Dorsolateral prefrontal cortex (tissue), 120 donors: ENCODE measurements at regions of chr3 and their contacts with region 1.

Region 1: GRCh38 chr3:160163229-160163878 is 61.9 kb upstream of the C3orf80 start:
- DNase-seq: no peak
- H3K4me3 ChIP-seq: no peak overlapping the region
- H3K27ac ChIP-seq: peak overlapping the region in 2 of 59 donors; percentile 14 to 18
- H3K27me3 ChIP-seq: no peaks in the 10 kb centered on the region
- CTCF ChIP-seq: peak in 55 of 56 donors; percentile 29 to 72 (median 54)

Region 2: GRCh38 chr3:159091936-159092335 is 1071.4 kb before region 1 on chr3:
- intact Hi-C with region 1: no loop called
- DNase-seq: no peak
- H3K4me3 ChIP-seq: no peak overlapping the region
- H3K27ac ChIP-seq: no peak overlapping the region
- H3K27me3 ChIP-seq: no peaks in the 10 kb centered on the region
- CTCF ChIP-seq: no peak

Region 3: DNA sequence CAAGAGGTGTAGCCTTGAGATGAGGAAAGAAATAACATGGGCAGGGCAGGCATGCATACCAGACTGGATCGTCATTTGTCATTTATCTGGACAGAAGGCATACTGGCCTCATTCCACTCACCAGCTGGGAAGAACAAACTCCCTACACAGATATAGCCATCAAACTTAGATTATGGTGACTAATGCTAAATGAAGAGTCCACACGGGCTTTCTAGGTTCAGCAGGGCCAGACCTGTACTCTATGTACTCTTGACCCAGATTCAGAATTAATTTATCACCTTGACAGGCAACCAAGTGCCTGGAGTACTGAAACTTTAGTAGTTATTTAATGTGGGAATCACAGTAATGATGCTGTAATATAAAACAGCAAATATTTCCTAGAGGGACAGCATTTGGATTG is 339.0 kb before region 1 on chr3:
- intact Hi-C with region 1: no loop called
- DNase-seq: no peak
- H3K4me3 ChIP-seq: no peak overlapping the region
- H3K27ac ChIP-seq: peak overlapping the region in 25 of 59 donors; percentile 2 to 69 (median 24)
- H3K27me3 ChIP-seq: no peaks in the 10 kb centered on the region
- CTCF ChIP-seq: peak in 1 of 56 donors; percentile 10

Region 4: DNA sequence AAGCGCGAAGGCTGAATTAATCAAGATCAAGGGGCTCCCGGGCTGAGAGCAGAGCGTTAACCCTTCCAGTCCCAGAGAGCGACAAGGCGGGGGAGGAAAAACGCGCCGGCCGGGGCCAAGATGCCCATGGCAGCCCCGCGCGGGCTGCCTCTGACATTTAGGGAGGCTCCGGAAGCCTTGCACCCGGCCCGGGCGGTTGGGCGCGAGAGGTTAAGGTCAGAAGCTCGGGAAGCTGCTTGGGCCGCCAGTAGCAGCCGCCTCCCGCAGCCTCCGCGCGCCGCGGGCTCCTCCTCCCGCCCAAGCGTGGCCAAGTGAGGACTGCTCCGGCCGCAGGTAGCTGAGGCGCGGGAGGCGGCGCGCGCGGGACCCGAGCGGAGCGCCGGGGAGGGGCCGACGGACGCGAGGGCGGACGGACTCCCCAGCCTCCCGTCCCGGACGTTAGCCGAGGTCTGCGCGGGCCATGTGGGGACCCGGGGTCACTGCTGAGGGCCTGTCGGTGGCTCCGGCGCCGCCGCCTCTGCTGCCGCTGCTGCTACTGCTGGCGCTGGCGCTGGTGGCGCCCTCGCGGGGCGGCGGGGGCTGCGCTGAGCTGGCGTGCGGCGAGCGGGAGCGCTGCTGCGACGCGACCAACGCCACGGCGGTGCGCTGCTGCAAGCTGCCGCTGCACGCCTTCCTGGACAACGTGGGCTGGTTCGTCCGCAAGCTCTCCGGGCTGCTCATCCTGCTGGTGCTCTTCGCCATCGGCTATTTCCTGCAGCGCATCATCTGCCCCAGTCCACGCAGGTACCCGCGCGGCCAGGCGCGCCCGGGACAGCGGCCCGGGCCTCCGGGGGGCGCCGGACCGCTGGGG is 62.0 kb after region 1 on chr3 and contains the start of gene C3orf80:
- intact Hi-C with region 1: loop called in 1 of 2 experiments (anchors 10 kb)
- DNase-seq: peak in 9 of 10 donors; percentile 34 to 79 (median 60)
- H3K4me3 ChIP-seq: peak within 1 kb of the TSS; percentile 47 to 80 (median 69)
- H3K27ac ChIP-seq: peak within 1 kb of the TSS in 57 of 59 donors; percentile 8 to 86 (median 73)
- H3K27me3 ChIP-seq: peaks cover 0 to 28% (median 0%) of the 10 kb centered on the region in 45 donors
- CTCF ChIP-seq: peak in 34 of 56 donors; percentile 5 to 60 (median 30)
- total RNA-seq, gene C3orf80: 6.4 to 36.0 (median 19.3) TPM

Region 5: GRCh38 chr3:160343132-160343531 is 179.8 kb after region 1 on chr3:
- intact Hi-C with region 1: loop called (anchors 5 kb)
- DNase-seq: no peak
- H3K4me3 ChIP-seq: no peak overlapping the region
- H3K27ac ChIP-seq: no peak overlapping the region
- H3K27me3 ChIP-seq: no peaks in the 10 kb centered on the region
- CTCF ChIP-seq: peak; percentile 14 to 77 (median 56)

Region 6: GRCh38 chr3:160413613-160414248 is 250.4 kb after region 1 on chr3:
- intact Hi-C with region 1: loop called (anchors 10 kb)
- DNase-seq: peak in 5 of 10 donors; percentile 45 to 75 (median 61)
- H3K4me3 ChIP-seq: no peak overlapping the region
- H3K27ac ChIP-seq: peak overlapping the region in 11 of 59 donors; percentile 7 to 57 (median 35)
- H3K27me3 ChIP-seq: no peaks in the 10 kb centered on the region
- CTCF ChIP-seq: peak; percentile 79 to 99 (median 90)

Region 7: DNA sequence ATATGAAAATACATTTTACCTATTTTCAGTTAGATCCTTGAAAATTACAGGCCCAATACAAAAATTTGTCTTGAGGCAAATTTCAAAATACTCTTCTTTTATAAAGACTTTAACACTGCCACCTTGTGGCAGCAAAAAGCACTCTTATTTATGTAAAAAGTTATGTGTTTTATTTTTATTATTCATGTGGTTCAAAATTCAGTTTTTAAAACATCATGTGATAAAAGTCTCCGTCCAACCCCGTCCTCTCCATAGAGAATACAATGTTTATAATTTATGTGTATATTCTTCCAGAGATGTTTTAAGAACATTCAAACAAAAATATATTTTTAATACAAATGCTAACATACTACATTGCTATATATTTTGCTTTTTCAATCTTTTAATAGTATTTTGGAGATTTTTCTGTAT is 323.1 kb after region 1 on chr3:
- intact Hi-C with region 1: loop called in 1 of 2 experiments (anchors 5 kb)
- DNase-seq: no peak
- H3K4me3 ChIP-seq: peak overlapping the region in 32 of 59 donors; percentile 14 to 68 (median 48)
- H3K27ac ChIP-seq: peak overlapping the region in 29 of 59 donors; percentile 35 to 86 (median 73)
- H3K27me3 ChIP-seq: no peaks in the 10 kb centered on the region
- CTCF ChIP-seq: peak; percentile 55 to 92 (median 78)